PC-3 (cell line): ENCODE measurements at regions of chr15 and their contacts with region 1.

Region 1: GRCh38 chr15:59384507-59384906 is 11.8 kb upstream of the MYO1E start:
- DNase-seq: no peak
- ATAC-seq: no peak
- H3K4me3 ChIP-seq: no peak overlapping the region
- H3K27ac ChIP-seq: no peak overlapping the region
- H3K4me1 ChIP-seq: peaks cover 12% of the 10 kb centered on the region; the same call in 1 of the 2 replicates
- H3K27me3 ChIP-seq: no peaks in the 10 kb centered on the region
- CTCF ChIP-seq: no peak

Region 2: DNA sequence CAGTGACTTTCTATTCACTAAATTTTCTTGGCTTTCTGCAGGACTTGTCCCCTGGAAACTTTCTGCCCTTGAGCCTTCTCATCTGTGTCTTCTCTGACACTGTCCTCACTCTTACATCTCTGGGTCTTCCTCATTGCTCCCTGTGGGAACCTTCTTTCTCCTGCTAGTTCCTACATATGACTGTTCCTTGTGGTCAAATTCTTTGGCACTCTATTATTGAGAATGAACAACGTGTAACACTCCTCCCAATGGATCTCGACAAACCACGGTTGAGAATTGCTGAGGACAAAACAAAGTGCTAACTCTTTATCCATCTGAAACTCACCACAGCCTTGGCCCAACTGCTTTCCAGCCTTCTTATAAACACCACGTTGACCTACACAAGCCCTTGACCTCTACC is 50.0 kb after region 1 on chr15:
- CTCF ChIA-PET with region 1: no interaction called
- POLR2A ChIA-PET with region 1: interaction called, 13 read pairs
- intact Hi-C with region 1: no loop called
- DNase-seq: no peak
- ATAC-seq: no peak
- H3K4me3 ChIP-seq: no peak overlapping the region
- H3K27ac ChIP-seq: no peak overlapping the region
- H3K4me1 ChIP-seq: peaks cover 11% of the 10 kb centered on the region; the same call in 1 of the 2 replicates
- H3K27me3 ChIP-seq: no peaks in the 10 kb centered on the region
- CTCF ChIP-seq: no peak